Activated CD8-positive, alpha-beta T cell treated with anti-CD3 and anti-CD28 coated beads for 36 hours (primary cell): ENCODE measurements at regions of chr1 and their contacts with region 1.

Region 1: DNA sequence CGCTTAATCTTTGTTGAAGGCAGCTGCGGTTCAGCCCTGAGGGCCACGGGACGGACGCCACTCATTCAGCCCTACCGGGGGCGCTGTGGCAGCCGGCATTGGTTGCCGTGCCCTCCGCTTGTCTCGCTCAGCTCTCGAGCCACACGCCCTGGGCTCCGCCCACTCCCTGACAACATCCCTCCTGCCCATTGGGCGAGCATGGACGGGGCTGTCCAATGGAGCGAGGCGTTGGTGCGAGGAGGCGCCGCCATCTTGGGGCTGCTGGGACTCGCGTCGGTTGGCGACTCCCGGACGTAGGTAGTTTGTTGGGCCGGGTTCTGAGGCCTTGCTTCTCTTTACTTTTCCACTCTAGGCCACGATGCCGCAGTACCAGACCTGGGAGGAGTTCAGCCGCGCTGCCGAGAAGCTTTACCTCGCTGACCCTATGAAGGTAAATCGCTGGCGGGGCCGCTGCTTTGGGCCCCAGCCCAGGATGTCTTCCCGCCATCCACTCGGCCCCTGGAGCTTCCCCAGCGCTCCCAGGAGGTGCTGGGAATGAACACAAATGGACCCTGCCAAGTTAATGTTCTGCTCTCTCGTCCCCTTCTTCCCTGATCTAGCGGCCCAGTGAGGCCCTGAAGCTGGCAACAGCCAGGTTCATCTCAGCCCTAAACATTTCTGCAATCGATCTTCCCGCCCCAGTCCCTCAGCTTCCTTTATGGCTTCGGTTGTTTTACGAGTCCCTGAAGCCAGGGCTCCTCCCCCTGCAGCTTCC is at the start of gene SRP9:
- DNase-seq: peak; percentile 99
- ATAC-seq: peak; percentile 97
- H3K4me3 Mint-ChIP-seq: no peak within 1 kb of the TSS
- H3K27ac Mint-ChIP-seq: no peak within 1 kb of the TSS
- H3K4me1 Mint-ChIP-seq: peaks cover 27% of the 10 kb centered on the region
- H3K27me3 Mint-ChIP-seq: no peaks in the 10 kb centered on the region
- CTCF ChIP-seq: peak; percentile 85
- total RNA-seq, gene SRP9: 275 to 304 TPM

Region 2: DNA sequence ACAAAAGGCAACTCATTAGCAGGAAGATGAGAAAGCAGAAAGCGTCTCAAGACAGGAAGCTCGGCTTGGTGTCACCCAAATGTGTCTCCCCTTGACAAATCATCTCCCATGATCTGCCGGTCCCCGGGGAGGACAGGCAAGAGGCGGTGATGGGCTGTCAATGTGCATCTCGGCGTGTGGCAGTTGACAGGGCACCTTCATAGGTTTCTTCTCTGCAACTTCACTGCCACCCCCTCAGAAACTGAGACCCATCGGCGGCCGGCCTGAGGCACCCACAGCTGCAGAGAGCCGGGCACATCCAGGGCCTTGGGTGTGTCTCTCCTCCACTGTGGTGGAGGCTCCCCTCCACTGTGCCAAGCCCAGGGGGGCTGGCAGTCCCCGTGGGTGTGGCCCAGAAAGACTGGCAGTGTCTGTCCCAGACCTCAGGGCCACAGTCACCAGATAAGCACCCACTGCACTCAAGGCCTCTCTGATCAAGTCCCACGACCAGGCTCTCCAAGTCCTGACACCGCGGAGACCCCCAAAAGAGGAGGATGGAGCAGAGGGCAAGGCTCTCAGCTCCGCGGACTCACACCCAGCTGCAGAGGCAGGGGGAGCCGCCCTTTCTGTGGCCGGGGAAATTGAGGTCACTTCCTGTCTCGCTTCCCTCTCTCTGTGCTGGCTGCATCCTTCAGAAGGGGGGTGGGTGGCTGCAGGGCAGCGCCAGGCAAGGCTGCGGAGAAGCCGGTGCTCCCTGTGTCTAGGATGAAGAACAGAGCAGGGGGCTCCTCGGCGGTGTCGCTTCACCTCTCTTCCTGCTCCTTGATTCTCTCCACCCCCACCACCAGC is 310.4 kb before region 1 on chr1:
- CTCF ChIA-PET with region 1: interaction called, 7 read pairs
- POLR2A ChIA-PET with region 1: interaction called, 15 read pairs
- intact Hi-C with region 1: no loop called
- DNase-seq: peak; percentile 91
- ATAC-seq: peak; percentile 90
- H3K4me3 Mint-ChIP-seq: peak overlapping the region; percentile 91
- H3K27ac Mint-ChIP-seq: peak overlapping the region; percentile 99
- H3K4me1 Mint-ChIP-seq: peaks cover 20% of the 10 kb centered on the region
- H3K27me3 Mint-ChIP-seq: no peaks in the 10 kb centered on the region
- CTCF ChIP-seq: no peak

Region 3: GRCh38 chr1:225533238-225533637 is 244.5 kb before region 1 on chr1:
- CTCF ChIA-PET with region 1: no interaction called
- POLR2A ChIA-PET with region 1: no interaction called
- intact Hi-C with region 1: no loop called
- DNase-seq: no peak
- ATAC-seq: no peak
- H3K4me3 Mint-ChIP-seq: no peak overlapping the region
- H3K27ac Mint-ChIP-seq: no peak overlapping the region
- H3K4me1 Mint-ChIP-seq: no peaks in the 10 kb centered on the region
- H3K27me3 Mint-ChIP-seq: peaks cover 10% of the 10 kb centered on the region
- CTCF ChIP-seq: no peak

Region 4: GRCh38 chr1:225766967-225767633 is 10.7 kb before region 1 on chr1:
- CTCF ChIA-PET with region 1: interaction called, 13 read pairs
- POLR2A ChIA-PET with region 1: interaction called, 7 read pairs
- intact Hi-C with region 1: no loop called
- DNase-seq: no peak
- ATAC-seq: no peak
- H3K4me3 Mint-ChIP-seq: no peak overlapping the region
- H3K27ac Mint-ChIP-seq: no peak overlapping the region
- H3K4me1 Mint-ChIP-seq: no peaks in the 10 kb centered on the region
- H3K27me3 Mint-ChIP-seq: no peaks in the 10 kb centered on the region
- CTCF ChIP-seq: no peak

Region 5: DNA sequence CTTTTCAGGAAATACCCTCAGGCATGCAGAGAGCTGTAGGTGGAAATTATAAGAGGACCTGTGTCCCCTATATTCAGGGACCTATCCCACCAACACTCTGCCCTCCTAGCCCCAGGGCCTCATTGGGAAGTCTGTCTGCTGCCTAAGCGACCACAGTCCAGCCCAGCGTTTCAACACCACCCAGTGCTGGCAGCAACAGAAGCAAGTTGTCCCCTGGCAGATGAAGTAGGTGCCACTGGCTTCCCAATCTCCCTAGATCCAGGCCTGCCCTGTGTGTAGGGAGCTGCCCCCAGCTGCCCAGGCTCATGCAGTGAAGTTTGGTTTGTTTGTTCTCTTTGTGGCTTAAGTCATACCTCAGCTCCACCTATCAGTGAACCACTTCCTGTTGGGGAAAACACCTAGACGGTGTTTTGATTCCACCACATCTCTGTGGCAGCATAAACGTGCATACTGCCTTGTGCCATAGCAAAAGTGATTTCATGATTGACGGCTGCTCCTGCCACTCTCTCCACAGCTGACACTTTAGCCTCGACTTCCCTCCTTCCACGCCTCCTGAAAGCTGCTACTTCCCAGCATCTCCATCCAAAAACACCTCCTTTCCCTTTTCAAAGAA is 119.3 kb after region 1 on chr1:
- CTCF ChIA-PET with region 1: interaction called, 4 read pairs
- POLR2A ChIA-PET with region 1: interaction called, 11 read pairs
- intact Hi-C with region 1: no loop called
- DNase-seq: peak; percentile 85
- ATAC-seq: peak; percentile 96
- H3K4me3 Mint-ChIP-seq: peak overlapping the region; percentile 57
- H3K27ac Mint-ChIP-seq: peak overlapping the region; percentile 91
- H3K4me1 Mint-ChIP-seq: peaks cover 38% of the 10 kb centered on the region
- H3K27me3 Mint-ChIP-seq: no peaks in the 10 kb centered on the region
- CTCF ChIP-seq: no peak

Region 6: GRCh38 chr1:225977937-225978748 is 200.4 kb after region 1 on chr1:
- CTCF ChIA-PET with region 1: interaction called, 4 read pairs
- POLR2A ChIA-PET with region 1: interaction called, 3 read pairs
- intact Hi-C with region 1: loop called (anchors 5 kb)
- DNase-seq: no peak
- ATAC-seq: no peak
- H3K4me3 Mint-ChIP-seq: no peak overlapping the region
- H3K27ac Mint-ChIP-seq: peak overlapping the region; percentile 10
- H3K4me1 Mint-ChIP-seq: peaks cover 11% of the 10 kb centered on the region
- H3K27me3 Mint-ChIP-seq: no peaks in the 10 kb centered on the region
- CTCF ChIP-seq: no peak